Activated CD4-positive, alpha-beta T cell treated with anti-CD3 and anti-CD28 coated beads for 36 hours (primary cell): ENCODE measurements at regions of chr3 and their contacts with region 1.

Region 1: GRCh38 chr3:141498598-141499223 is 11.9 kb downstream of the RASA2 start:
- DNase-seq: peak; percentile 90
- ATAC-seq: peak; percentile 84
- H3K4me3 Mint-ChIP-seq: peak overlapping the region; percentile 54
- H3K27ac Mint-ChIP-seq: peak overlapping the region; percentile 96
- H3K4me1 Mint-ChIP-seq: peaks cover 76% of the 10 kb centered on the region
- H3K27me3 Mint-ChIP-seq: no peaks in the 10 kb centered on the region

Region 2: DNA sequence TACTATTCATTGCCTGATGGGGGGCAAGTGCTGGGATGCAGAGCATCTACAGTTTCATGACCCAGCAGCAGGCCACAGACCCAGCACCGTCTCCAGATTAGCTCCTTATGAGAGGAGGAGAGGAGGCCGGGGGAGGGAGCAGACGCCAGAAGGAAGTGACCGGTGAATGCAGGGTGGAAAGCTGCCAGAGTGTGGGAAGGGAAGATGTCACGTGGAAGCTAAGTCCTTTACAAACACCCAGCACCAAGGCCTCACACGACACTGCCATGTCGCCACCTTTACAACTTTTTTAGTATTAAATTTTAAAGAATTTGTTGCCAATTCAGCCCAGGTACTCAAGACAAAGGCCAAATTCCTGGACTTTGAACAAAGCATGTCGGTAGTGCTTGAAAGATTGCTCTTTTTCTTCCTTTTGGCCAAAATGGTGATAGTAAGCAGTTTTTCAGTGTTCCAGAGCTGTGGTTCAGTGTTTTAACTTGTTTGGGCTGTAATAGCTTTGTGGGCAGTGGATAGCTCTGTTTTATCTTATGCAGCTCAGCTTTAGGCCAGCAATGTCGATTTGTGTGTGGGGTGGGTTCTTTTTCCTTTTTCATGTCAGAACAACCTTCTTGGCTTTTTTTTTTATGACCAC is 72.2 kb before region 1 on chr3:
- CTCF ChIA-PET with region 1: no interaction called
- POLR2A ChIA-PET with region 1: no interaction called
- intact Hi-C with region 1: no loop called
- DNase-seq: no peak
- ATAC-seq: no peak
- H3K4me3 Mint-ChIP-seq: no peak overlapping the region
- H3K27ac Mint-ChIP-seq: peak overlapping the region; percentile 34
- H3K4me1 Mint-ChIP-seq: peaks cover 21% of the 10 kb centered on the region
- H3K27me3 Mint-ChIP-seq: no peaks in the 10 kb centered on the region

Region 3: DNA sequence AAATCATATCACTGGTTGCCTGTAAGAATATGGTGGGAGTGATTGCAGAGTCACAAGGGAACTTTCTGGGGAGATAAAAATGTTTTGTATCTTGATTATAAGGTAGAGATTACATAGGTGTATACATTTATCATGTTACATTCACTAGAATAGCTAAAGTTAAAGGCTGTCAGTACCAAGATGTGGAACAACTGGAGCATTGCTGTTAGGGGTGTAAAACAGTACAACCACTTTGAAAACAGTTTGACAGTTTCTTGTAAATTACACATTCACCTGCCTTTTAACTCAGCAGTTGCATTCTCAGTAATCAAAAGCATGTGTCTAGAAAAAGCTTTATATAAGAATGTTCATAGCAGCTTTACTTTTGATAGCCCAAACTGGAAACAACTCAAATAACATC is 15.7 kb after region 1 on chr3:
- CTCF ChIA-PET with region 1: interaction called, 17 read pairs
- POLR2A ChIA-PET with region 1: interaction called, 4 read pairs
- intact Hi-C with region 1: loop called (anchors 1 to 2 kb)
- DNase-seq: no peak
- ATAC-seq: peak; percentile 63
- H3K4me3 Mint-ChIP-seq: no peak overlapping the region
- H3K27ac Mint-ChIP-seq: peak overlapping the region; percentile 66
- H3K4me1 Mint-ChIP-seq: peaks cover 61% of the 10 kb centered on the region
- H3K27me3 Mint-ChIP-seq: no peaks in the 10 kb centered on the region

Region 4: DNA sequence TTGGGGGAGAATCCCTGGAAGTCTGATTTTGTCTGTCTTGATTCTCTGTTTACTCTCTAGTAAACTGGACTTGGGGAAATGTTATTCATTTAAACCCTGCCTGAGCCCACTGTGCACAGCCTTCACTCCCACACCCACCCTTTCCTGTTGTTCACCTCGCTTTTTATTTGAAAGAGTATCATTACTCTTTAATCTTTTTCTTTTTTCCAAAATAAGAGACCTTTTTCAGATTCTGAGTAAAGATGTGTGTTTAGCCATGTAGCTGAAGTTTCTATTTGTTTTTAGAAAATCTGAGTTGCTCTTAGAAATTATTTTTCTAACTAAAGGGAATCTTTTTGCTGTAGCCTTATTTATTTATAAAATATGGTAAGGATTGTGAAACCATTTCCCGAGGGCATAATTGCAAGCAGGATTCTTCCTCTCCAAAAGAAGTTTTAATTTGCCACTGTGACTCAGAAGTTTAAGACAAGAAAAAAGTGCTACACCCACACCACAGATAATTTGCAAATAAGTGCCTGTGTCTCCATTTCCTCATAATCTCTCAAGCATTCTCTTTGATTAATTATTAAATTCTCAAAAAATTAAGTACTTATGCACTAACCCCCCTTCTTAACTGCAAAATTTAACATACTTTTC is 31.5 kb after region 1 on chr3:
- CTCF ChIA-PET with region 1: no interaction called
- POLR2A ChIA-PET with region 1: no interaction called
- intact Hi-C with region 1: loop called (anchors 1 kb)
- DNase-seq: peak; percentile 37
- ATAC-seq: peak; percentile 63
- H3K4me3 Mint-ChIP-seq: peak overlapping the region; percentile 1
- H3K27ac Mint-ChIP-seq: peak overlapping the region; percentile 37
- H3K4me1 Mint-ChIP-seq: peaks cover 72% of the 10 kb centered on the region
- H3K27me3 Mint-ChIP-seq: no peaks in the 10 kb centered on the region

Region 5: DNA sequence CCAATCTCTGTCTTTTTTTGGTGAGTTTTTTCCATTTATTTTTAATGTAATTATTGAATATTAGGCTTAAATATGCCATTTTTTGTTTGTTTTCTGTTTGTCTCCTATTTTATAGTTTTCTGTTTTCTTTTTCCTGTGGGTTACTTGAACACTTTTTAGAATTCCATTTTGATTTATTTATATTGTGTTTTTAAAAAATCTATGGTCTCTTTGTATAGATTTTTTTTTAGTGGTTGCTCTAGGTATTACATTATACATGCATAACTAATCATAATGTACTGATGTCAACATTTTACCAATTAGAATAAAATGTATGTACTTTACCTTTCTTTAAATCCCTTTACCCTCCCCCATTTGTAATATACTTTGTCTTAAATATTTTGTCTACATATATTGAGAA is 44.3 kb after region 1 on chr3:
- CTCF ChIA-PET with region 1: interaction called, 5 read pairs
- POLR2A ChIA-PET with region 1: no interaction called
- intact Hi-C with region 1: loop called (anchors 1 kb)
- DNase-seq: no peak
- ATAC-seq: no peak
- H3K4me3 Mint-ChIP-seq: no peak overlapping the region
- H3K27ac Mint-ChIP-seq: peak overlapping the region; percentile 77
- H3K4me1 Mint-ChIP-seq: peaks cover 84% of the 10 kb centered on the region
- H3K27me3 Mint-ChIP-seq: no peaks in the 10 kb centered on the region

Region 6: DNA sequence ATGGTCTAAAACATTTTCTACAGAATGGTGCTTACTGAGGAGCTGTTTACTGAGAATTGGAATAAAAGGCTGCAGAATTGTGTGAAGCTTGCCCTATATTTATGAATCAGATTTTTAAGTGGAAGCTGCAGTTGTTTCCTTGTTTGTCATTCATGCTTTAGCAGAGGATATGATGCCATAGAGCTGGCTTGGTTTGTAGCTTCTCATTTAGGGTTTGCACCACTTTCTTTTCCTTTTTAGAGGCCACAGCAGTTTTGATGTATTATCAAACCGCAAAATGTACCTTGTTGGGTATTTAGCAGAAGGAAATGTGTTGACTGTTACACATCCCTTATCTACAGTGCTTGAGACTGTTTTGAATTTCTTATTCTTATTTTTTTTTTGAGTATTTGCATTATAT is 54.3 kb after region 1 on chr3:
- CTCF ChIA-PET with region 1: interaction called, 28 read pairs
- POLR2A ChIA-PET with region 1: interaction called, 32 read pairs
- intact Hi-C with region 1: loop called (anchors 1 kb)
- DNase-seq: no peak
- ATAC-seq: peak; percentile 63
- H3K4me3 Mint-ChIP-seq: no peak overlapping the region
- H3K27ac Mint-ChIP-seq: peak overlapping the region; percentile 88
- H3K4me1 Mint-ChIP-seq: peaks cover 53% of the 10 kb centered on the region
- H3K27me3 Mint-ChIP-seq: no peaks in the 10 kb centered on the region

Region 7: DNA sequence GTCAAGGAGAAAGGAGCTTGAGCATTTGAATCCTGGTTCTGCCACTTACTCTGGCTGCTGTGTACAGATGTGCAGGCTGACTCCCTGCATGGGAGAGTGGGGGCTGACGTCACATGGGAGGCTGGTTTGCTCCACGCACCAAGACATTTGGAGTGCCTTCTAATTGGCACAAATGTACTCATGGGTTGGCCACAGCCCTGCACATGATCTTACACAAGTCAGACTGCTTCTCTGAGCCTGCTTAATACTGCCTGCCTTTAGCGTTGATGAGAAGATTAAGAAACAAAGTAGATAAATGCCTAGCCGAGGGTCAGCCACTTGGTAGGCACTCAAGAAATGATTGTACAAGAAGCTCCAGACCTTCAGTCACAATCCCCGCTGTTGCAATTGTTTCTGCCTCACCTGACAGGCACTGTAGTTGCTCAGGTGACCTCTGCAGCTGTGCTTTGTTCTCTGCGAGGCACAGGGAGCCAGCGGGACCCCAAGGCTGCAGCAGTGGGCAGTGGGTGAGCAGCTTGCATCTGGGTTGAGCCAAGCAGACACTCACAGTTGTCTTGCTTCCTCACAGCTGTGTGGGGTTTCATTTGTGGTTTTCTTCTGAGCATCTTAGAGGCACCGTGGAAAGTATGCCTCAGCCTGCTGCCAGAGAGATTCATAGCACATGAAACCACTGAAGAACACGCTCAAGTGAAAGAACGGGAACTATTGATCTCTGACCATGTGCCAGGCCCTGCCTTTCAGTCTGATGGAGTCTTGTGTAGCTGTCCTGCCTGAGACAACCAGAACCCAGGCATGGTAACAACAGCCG is 297.6 kb after region 1 on chr3:
- CTCF ChIA-PET with region 1: no interaction called
- POLR2A ChIA-PET with region 1: no interaction called
- intact Hi-C with region 1: no loop called
- DNase-seq: peak; percentile 90
- ATAC-seq: peak; percentile 84
- H3K4me3 Mint-ChIP-seq: peak overlapping the region; percentile 77
- H3K27ac Mint-ChIP-seq: peak overlapping the region; percentile 97
- H3K4me1 Mint-ChIP-seq: peaks cover 52% of the 10 kb centered on the region
- H3K27me3 Mint-ChIP-seq: no peaks in the 10 kb centered on the region